ENCODE measurements at regions of chr3 and their contacts with region 1.

Region 1: DNA sequence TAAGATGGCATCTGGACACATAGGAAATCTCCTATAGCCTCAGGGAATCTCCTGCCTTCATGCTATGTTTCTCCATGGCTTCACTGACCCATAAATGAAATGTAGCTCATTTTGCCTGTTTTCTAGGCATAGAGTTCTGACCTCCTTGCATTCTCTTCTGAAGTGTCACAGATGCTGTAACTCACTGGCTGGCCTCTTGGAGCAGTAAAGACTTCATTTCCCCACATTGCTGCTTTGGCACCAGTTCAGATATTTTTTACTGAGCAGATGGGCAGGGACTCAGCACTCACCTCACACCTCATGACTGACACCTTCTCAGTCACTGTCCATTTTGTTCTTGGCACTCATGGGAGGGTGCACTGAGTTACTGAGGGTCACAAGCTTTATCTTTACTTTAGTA is 286.7 kb upstream of the TGFBR2 start:
- DNase-seq: peak; percentile 45 to 70 (median 59)
- ATAC-seq: peak; percentile 92 to 93
- H3K4me3 ChIP-seq: no peak overlapping the region
- H3K27ac ChIP-seq: peak overlapping the region; percentile 15
- H3K4me1 ChIP-seq: no peaks in the 10 kb centered on the region
- H3K27me3 ChIP-seq: no peaks in the 10 kb centered on the region

Region 2: GRCh38 chr3:30135190-30135589 is 184.5 kb before region 1 on chr3:
- intact Hi-C with region 1: no loop called
- DNase-seq: peak in 1 of 3 donors; percentile 46
- ATAC-seq: peak in 1 of 2 donors; percentile 72
- H3K4me3 ChIP-seq: no peak overlapping the region
- H3K27ac ChIP-seq: no peak overlapping the region
- H3K4me1 ChIP-seq: no peaks in the 10 kb centered on the region
- H3K27me3 ChIP-seq: no peaks in the 10 kb centered on the region

Region 3: DNA sequence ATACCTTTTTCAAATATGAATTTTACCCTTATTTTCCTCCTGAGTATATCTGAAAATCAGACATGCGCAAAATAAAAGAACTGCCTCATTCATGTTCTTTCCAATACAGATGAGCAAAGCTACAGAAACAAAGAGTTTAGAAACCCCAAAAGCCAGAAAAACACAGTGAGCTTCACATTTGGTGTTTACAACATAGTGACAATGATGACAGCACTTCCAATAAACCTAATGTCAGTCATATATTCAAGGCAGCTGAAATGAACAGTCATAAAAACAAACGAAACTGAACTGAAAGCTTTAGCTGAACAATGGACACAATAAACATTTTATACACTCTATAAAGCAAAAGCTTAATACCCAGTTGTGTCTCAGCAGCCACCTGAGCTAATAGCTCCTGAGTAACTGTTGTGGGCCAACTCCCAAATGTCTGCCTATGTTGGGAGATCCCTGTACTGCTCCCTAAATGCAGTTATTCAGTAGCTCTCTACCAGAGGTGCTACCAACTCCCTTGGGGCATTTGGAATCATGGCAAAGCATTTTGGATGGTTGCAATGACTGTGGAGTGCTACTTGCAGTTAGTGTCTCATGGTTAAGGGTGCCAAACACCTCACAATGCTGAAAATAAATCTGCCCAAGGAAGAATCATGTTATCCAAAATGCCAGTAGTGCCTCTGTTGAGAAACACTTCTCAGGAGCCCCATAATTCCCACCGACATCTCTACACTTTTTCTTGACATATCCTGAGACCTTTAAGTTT is 418.2 kb after region 1 on chr3:
- intact Hi-C with region 1: loop called in 1 of 4 experiments (anchors 10 kb)
- DNase-seq: no peak
- ATAC-seq: no peak
- H3K4me3 ChIP-seq: no peak overlapping the region
- H3K27ac ChIP-seq: no peak overlapping the region
- H3K4me1 ChIP-seq: peaks cover 2% of the 10 kb centered on the region
- H3K27me3 ChIP-seq: no peaks in the 10 kb centered on the region